Activated CD4-positive, alpha-beta T cell treated with anti-CD3 and anti-CD28 coated beads, Interleukin-2, amount 10 ng/mL, durations not matched to agents 24 days and 14 days (primary cell): ENCODE measurements at regions of chr11 and their contacts with region 1.

Region 1: GRCh38 chr11:57667736-57668435 is at the start of gene ZDHHC5:
- DNase-seq: peak; percentile 100
- H3K4me3 Mint-ChIP-seq: peak within 1 kb of the TSS; percentile 86
- H3K27ac Mint-ChIP-seq: peak within 1 kb of the TSS; percentile 97
- H3K4me1 Mint-ChIP-seq: peaks cover 35% of the 10 kb centered on the region
- H3K27me3 Mint-ChIP-seq: no peaks in the 10 kb centered on the region
- total RNA-seq, gene ZDHHC5: 78.4 and 80.9 TPM in 2 replicates

Region 2: GRCh38 chr11:57644748-57645688 is 22.9 kb before region 1 on chr11:
- intact Hi-C with region 1: no loop called
- DNase-seq: peak; percentile 96
- H3K4me3 Mint-ChIP-seq: no peak overlapping the region
- H3K27ac Mint-ChIP-seq: no peak overlapping the region
- H3K4me1 Mint-ChIP-seq: peaks cover 48% of the 10 kb centered on the region
- H3K27me3 Mint-ChIP-seq: peaks cover 40% of the 10 kb centered on the region

Region 3: GRCh38 chr11:57657194-57658022 is 10.5 kb before region 1 on chr11 and contains the start of gene CLP1:
- intact Hi-C with region 1: loop called (anchors 1 kb)
- DNase-seq: peak; percentile 100
- H3K4me3 Mint-ChIP-seq: peak within 1 kb of the TSS; percentile 86
- H3K27ac Mint-ChIP-seq: peak within 1 kb of the TSS; percentile 88
- H3K4me1 Mint-ChIP-seq: peaks cover 18% of the 10 kb centered on the region
- H3K27me3 Mint-ChIP-seq: no peaks in the 10 kb centered on the region
- total RNA-seq, gene CLP1: 18.5 and 19.8 TPM in 2 replicates

Region 4: DNA sequence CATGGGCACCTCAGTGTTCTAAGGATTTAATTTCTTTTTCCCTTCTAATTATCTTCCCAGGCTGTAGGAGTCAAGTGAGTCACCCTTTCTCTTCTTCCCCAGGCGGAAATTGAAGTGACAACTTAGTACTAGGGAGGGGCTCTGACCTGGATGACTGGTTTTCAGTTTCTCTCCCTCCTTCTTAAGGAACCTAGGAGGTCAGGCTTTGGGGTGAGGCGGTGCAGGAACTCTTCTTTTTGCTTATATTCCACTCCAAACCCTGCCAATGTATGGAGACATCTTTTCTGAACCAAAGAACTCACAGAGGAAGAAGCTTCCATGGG is 12.6 kb after region 1 on chr11:
- intact Hi-C with region 1: loop called (anchors 1 kb)
- DNase-seq: no peak
- H3K4me3 Mint-ChIP-seq: peak overlapping the region; percentile 2
- H3K27ac Mint-ChIP-seq: peak overlapping the region; percentile 83
- H3K4me1 Mint-ChIP-seq: peaks cover 36% of the 10 kb centered on the region
- H3K27me3 Mint-ChIP-seq: no peaks in the 10 kb centered on the region

Region 5: GRCh38 chr11:57712256-57713150 is 44.6 kb after region 1 on chr11 and contains the start of gene TMX2:
- intact Hi-C with region 1: loop called (anchors 1 kb)
- DNase-seq: peak; percentile 97
- H3K4me3 Mint-ChIP-seq: peak within 1 kb of the TSS; percentile 95
- H3K27ac Mint-ChIP-seq: peak within 1 kb of the TSS; percentile 96
- H3K4me1 Mint-ChIP-seq: peaks cover 39% of the 10 kb centered on the region
- H3K27me3 Mint-ChIP-seq: no peaks in the 10 kb centered on the region
- total RNA-seq, gene TMX2: 99.0 and 99.2 TPM in 2 replicates

Region 6: GRCh38 chr11:57792060-57792541 is 124.2 kb after region 1 on chr11:
- intact Hi-C with region 1: loop called (anchors 2 kb)
- DNase-seq: peak; percentile 95
- H3K4me3 Mint-ChIP-seq: peak overlapping the region; percentile 79
- H3K27ac Mint-ChIP-seq: peak overlapping the region; percentile 93
- H3K4me1 Mint-ChIP-seq: peaks cover 41% of the 10 kb centered on the region
- H3K27me3 Mint-ChIP-seq: no peaks in the 10 kb centered on the region